ENCODE measurements at regions of chr5 and their contacts with region 1.

Region 1: DNA sequence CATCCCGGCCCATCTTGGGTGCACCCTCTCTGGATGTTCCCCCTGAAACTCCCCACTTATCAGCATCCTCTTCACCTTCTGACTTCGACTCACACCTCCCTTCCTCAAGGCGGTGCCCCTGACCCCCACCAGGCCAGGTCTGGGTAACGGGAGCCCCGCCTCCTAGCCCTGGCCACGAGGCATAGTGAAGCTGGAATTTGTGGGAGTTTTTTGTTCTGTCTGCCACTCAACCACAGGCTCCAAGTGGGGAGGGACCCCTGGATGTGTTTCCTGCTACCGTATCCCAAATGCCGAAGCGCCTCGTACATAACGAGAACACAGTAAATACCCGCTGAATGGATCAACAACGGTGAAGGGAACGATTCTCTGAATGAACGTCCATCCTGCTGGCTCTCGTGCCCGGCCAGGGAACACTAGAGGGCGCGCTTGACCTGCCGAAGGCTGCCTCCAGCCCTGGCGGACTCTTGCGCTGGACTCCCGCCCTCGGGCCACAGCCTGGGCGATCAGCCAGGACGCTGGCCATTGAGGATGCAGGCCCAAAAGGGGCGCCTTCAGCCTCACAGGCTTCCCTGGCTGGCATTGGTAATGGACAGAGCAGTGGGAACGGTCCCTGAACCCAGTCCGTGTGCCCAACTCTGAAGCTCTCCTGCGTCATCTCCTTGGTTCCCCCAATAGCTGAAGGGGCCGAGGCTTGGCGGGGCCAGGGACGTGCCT is 47.3 kb upstream of the PHYKPL start:
- DNase-seq: peak; percentile 33
- H3K4me3 Mint-ChIP-seq: no peak overlapping the region
- H3K27ac Mint-ChIP-seq: no peak overlapping the region
- H3K4me1 Mint-ChIP-seq: peaks cover 5% of the 10 kb centered on the region
- H3K27me3 Mint-ChIP-seq: peaks cover 9% of the 10 kb centered on the region

Region 2: DNA sequence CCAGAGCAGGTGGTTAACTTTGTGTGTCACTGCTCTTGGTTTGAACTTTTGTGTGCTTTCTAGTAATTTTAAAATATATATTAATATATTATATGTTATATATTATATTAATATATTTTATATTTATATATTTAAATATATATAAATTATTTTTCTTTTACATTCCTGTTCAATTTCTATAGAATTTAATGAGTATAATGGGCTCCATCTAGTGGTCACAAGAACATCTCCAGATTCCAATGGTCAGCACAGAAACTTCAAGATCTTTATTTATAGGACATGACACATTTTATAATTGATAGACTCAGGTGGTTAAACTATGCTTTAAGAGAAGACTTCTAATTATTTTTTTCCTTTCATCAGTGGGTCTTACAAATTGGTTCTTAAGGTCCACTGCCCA is 271.2 kb after region 1 on chr5:
- intact Hi-C with region 1: loop called (anchors 1 kb)
- DNase-seq: no peak
- H3K4me3 Mint-ChIP-seq: no peak overlapping the region
- H3K27ac Mint-ChIP-seq: no peak overlapping the region
- H3K4me1 Mint-ChIP-seq: no peaks in the 10 kb centered on the region
- H3K27me3 Mint-ChIP-seq: peaks cover 3% of the 10 kb centered on the region

Region 3: GRCh38 chr5:178590141-178590923 is 310.4 kb after region 1 on chr5 and contains the start of gene COL23A1:
- intact Hi-C with region 1: loop called (anchors 1 kb)
- DNase-seq: peak; percentile 31
- H3K4me3 Mint-ChIP-seq: peak within 1 kb of the TSS; percentile 75
- H3K27ac Mint-ChIP-seq: no peak within 1 kb of the TSS
- H3K4me1 Mint-ChIP-seq: peaks cover 9% of the 10 kb centered on the region
- H3K27me3 Mint-ChIP-seq: peaks cover 37% of the 10 kb centered on the region
- total RNA-seq, gene COL23A1: not detected in 2 replicates

Region 4: GRCh38 chr5:179494774-179495526 is 1215.1 kb after region 1 on chr5:
- intact Hi-C with region 1: loop called (anchors 1 kb)
- DNase-seq: no peak
- H3K4me3 Mint-ChIP-seq: no peak overlapping the region
- H3K27ac Mint-ChIP-seq: no peak overlapping the region
- H3K4me1 Mint-ChIP-seq: no peaks in the 10 kb centered on the region
- H3K27me3 Mint-ChIP-seq: peaks cover 8% of the 10 kb centered on the region